GM12878 (cell line): ENCODE measurements at regions of chr10 and their contacts with region 1.

Region 1: GRCh38 chr10:110923856-110924493 is 4.6 kb downstream of the SHOC2 start:
- DNase-seq: no peak
- ATAC-seq: peak; percentile 19
- H3K4me3 ChIP-seq: peak overlapping the region; percentile 51
- H3K27ac ChIP-seq: peak overlapping the region; percentile 64
- H3K4me1 ChIP-seq: peaks cover 29% of the 10 kb centered on the region
- H3K27me3 ChIP-seq: no peaks in the 10 kb centered on the region
- CTCF ChIP-seq: no peak
- EP300 ChIP-seq: 0 out of 4 replicates have a peak, but pooled peaks of 1 of the 2 experiments have one; percentile 55
- POLR2A ChIP-seq: no peak
- RAD21 ChIP-seq: no peak

Region 2: DNA sequence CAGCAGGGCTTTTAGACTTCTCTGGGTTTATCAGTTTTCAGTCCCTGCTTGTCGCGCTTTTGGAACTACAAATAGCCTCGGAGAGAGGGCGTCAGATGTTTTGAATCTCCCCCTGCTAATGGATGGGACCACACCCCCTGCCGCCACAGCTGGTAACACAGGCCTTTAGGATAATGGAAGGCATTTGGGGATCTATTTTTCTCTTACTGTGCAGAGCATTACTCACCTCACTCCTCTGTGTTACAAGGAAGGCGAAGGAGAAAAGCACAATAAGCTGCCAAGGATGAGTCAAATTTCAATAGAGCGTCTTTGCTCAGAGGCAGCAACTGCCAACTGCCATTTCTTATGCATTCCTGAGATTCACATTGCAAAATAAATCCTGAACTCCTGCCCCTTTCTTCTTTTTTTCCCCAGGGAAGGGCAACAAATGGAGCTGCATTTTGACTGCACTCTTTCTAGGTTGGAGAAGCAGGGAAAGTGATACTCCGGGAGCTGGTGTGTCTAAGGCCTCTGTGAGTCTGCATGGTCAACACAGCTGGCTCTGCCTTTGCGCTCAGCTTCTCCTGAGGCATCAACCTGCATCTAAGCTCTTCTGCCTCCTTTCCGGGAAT is 587.8 kb before region 1 on chr10:
- CTCF ChIA-PET with region 1: no interaction called
- POLR2A ChIA-PET with region 1: no interaction called
- RAD21 ChIA-PET with region 1: no interaction called
- SMC1A ChIA-PET with region 1: no interaction called
- in situ Hi-C with region 1: no loop called
- intact Hi-C with region 1: no loop called
- DNase-seq: no peak
- ATAC-seq: no peak
- H3K4me3 ChIP-seq: no peak overlapping the region
- H3K27ac ChIP-seq: no peak overlapping the region
- H3K4me1 ChIP-seq: no peaks in the 10 kb centered on the region
- H3K27me3 ChIP-seq: no peaks in the 10 kb centered on the region
- CTCF ChIP-seq: no peak
- EP300 ChIP-seq: no peak
- POLR2A ChIP-seq: no peak
- RAD21 ChIP-seq: no peak

Region 3: DNA sequence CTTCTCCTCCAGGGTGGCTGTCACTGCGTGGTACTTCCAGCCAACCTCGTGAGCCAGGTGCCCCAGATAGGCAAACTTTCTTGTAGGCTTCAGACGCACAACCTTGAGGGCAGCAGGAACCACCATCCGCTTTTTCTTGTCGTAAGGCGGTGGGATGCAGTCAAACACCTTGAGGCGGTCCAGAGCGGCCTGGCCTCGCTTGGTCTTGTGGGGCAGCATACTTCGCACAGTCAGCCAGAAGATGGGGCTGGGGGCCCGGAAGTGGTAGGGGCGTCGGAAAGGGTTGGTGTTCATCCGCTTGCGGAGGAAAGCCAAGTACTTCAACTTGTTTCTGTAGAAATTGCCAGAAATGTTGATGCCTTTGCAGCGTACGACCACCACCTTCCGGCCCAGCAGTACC is 12.8 kb after region 1 on chr10:
- CTCF ChIA-PET with region 1: interaction called, 10 read pairs
- POLR2A ChIA-PET with region 1: interaction called, 12 read pairs
- RAD21 ChIA-PET with region 1: interaction called, 7 read pairs
- SMC1A ChIA-PET with region 1: interaction called, 10 read pairs
- in situ Hi-C with region 1: no loop called
- intact Hi-C with region 1: no loop called
- DNase-seq: no peak
- ATAC-seq: no peak
- H3K4me3 ChIP-seq: no peak overlapping the region
- H3K27ac ChIP-seq: no peak overlapping the region
- H3K4me1 ChIP-seq: no peaks in the 10 kb centered on the region
- H3K27me3 ChIP-seq: no peaks in the 10 kb centered on the region
- CTCF ChIP-seq: no peak
- EP300 ChIP-seq: no peak
- POLR2A ChIP-seq: no peak
- RAD21 ChIP-seq: no peak

Region 4: GRCh38 chr10:110967645-110968044 is 43.7 kb after region 1 on chr10:
- CTCF ChIA-PET with region 1: no interaction called
- POLR2A ChIA-PET with region 1: interaction called, 3 read pairs
- RAD21 ChIA-PET with region 1: interaction called, 4 read pairs
- SMC1A ChIA-PET with region 1: interaction called, 31 read pairs
- in situ Hi-C with region 1: no loop called
- intact Hi-C with region 1: loop called (anchors 2 kb)
- DNase-seq: no peak
- ATAC-seq: peak; percentile 54
- H3K4me3 ChIP-seq: no peak overlapping the region
- H3K27ac ChIP-seq: no peak overlapping the region
- H3K4me1 ChIP-seq: peaks cover 3% of the 10 kb centered on the region; the same call in 1 of the 2 replicates
- H3K27me3 ChIP-seq: no peaks in the 10 kb centered on the region
- CTCF ChIP-seq: no peak
- EP300 ChIP-seq: no peak
- POLR2A ChIP-seq: no peak
- RAD21 ChIP-seq: no peak

Region 5: DNA sequence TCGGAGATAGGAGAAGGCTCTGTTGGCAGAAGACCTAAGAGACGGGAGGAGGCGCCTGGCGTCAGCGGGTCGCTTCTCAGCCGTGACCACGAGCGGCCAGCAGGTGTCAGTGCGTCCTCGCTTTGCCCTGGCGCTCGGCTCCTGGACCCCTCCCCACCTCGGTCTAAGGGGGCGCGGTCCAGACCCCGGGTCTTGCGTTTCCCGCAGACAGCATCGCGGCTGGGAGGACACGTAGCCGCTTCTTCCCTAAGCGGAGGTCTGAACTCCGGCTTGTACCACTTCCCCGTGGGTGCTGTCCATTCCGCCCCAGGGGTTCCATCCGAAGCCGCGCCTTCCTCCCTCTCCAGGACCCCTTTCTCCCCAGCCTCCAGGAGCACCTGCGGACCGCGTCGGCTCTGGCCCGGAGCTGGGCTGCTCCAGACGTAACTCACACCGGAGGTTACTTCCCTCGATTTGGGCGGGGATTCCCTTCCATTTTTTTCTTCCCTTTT is 152.3 kb after region 1 on chr10:
- CTCF ChIA-PET with region 1: no interaction called
- POLR2A ChIA-PET with region 1: no interaction called
- RAD21 ChIA-PET with region 1: no interaction called
- SMC1A ChIA-PET with region 1: no interaction called
- in situ Hi-C with region 1: no loop called
- intact Hi-C with region 1: no loop called
- DNase-seq: no peak
- ATAC-seq: peak; percentile 94
- H3K4me3 ChIP-seq: peak overlapping the region; percentile 45; the same call in 1 of the 2 replicates
- H3K27ac ChIP-seq: no peak overlapping the region
- H3K4me1 ChIP-seq: no peaks in the 10 kb centered on the region
- H3K27me3 ChIP-seq: peaks cover 10 to 23% of the 10 kb centered on the region in 2 experiments
- CTCF ChIP-seq: peak; percentile 71 to 75 (median 72)
- EP300 ChIP-seq: no peak
- POLR2A ChIP-seq: no peak
- RAD21 ChIP-seq: peak; percentile 62